ENCODE measurements at regions of chr11 and their contacts with region 1.

Region 1: DNA sequence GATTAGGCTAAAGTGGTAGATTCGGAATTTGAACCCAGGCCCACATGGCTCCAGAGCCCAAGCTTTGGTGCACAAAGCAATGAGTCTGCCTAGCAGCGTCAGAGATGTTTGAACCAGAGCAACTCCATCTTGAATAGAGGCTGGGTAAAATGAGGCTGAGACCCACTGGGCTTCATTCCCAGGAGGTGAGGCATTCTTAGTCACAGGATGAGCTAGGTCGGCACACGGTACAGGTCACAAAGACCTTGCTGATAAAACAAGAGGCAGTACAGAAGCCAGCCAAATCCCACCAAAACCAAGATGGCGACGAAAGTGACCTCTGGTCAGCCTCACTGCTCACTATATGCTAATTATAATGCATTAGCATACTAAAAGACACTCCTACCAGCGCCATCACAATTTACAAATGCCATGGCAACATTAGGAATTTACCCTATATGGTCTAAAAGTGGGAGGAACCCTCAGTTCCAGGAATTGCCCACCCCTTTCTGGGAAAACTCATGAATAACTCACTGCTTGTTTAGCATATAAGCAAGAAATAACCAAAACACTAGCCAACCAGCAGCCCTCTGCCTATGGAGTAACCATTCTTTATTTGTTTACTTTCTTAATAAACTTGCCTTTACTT is 40.3 kb upstream of the DAGLA start:
- DNase-seq: peak; percentile 12
- ATAC-seq: no peak
- H3K4me3 Mint-ChIP-seq: no peak overlapping the region
- H3K27ac Mint-ChIP-seq: no peak overlapping the region
- H3K4me1 Mint-ChIP-seq: no peaks in the 10 kb centered on the region
- H3K27me3 Mint-ChIP-seq: no peaks in the 10 kb centered on the region
- CTCF ChIP-seq: no peak

Region 2: GRCh38 chr11:61446211-61446651 is 193.7 kb before region 1 on chr11:
- CTCF ChIA-PET with region 1: interaction called, 15 read pairs
- POLR2A ChIA-PET with region 1: no interaction called
- intact Hi-C with region 1: no loop called
- DNase-seq: peak; percentile 92
- ATAC-seq: peak; percentile 92
- H3K4me3 Mint-ChIP-seq: no peak overlapping the region
- H3K27ac Mint-ChIP-seq: peak overlapping the region; percentile 54
- H3K4me1 Mint-ChIP-seq: peaks cover 32% of the 10 kb centered on the region
- H3K27me3 Mint-ChIP-seq: no peaks in the 10 kb centered on the region
- CTCF ChIP-seq: peak; percentile 75

Region 3: GRCh38 chr11:61516675-61517572 is 123.0 kb before region 1 on chr11:
- CTCF ChIA-PET with region 1: interaction called, 10 read pairs
- POLR2A ChIA-PET with region 1: no interaction called
- intact Hi-C with region 1: no loop called
- DNase-seq: peak; percentile 74
- ATAC-seq: peak; percentile 88
- H3K4me3 Mint-ChIP-seq: peak overlapping the region; percentile 1
- H3K27ac Mint-ChIP-seq: no peak overlapping the region
- H3K4me1 Mint-ChIP-seq: peaks cover 6% of the 10 kb centered on the region
- H3K27me3 Mint-ChIP-seq: peaks cover 8% of the 10 kb centered on the region
- CTCF ChIP-seq: peak; percentile 99

Region 4: DNA sequence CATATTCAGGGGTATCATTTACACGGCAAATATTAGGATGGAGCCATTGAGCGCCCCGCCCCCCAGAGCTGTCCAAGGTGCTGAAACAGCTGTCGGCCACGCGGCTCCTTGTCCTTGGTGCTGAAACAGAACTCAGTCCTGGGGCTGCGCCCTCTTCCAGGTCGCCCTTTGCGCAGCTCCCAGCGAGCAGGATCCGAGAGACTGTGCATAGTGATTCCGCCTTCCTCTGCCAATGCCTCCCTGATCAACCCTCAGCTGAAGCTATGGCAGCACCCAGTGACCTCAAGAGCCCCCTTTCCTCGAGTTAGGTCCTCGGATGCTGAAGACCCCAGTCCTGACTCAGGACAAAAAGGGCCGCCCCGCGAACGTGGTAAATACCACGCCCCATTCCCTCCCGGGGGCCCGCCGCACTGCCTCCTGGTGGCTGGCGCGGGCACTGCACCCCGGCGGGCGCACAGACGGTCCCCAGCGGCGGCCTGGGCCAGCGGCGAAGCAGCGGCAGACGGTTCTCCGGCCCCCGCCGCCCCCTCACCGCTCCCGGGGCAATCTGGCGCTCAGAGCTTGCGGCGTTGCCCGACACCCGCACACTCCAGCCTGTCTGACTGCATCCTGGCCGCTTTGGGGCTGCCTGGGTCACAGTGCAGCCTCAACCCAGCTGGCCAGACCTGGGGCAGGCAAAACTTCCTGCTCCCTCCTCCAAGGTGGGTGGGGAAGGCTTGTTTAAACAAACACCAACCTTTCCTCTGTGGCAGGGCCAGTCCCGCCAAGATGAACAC is 72.5 kb before region 1 on chr11:
- CTCF ChIA-PET with region 1: interaction called, 13 read pairs
- POLR2A ChIA-PET with region 1: no interaction called
- intact Hi-C with region 1: no loop called
- DNase-seq: peak; percentile 83
- ATAC-seq: peak; percentile 94
- H3K4me3 Mint-ChIP-seq: no peak overlapping the region
- H3K27ac Mint-ChIP-seq: no peak overlapping the region
- H3K4me1 Mint-ChIP-seq: no peaks in the 10 kb centered on the region
- H3K27me3 Mint-ChIP-seq: peaks cover 38% of the 10 kb centered on the region
- CTCF ChIP-seq: peak; percentile 65

Region 5: GRCh38 chr11:61627567-61628445 is 12.1 kb before region 1 on chr11:
- CTCF ChIA-PET with region 1: interaction called, 28 read pairs
- POLR2A ChIA-PET with region 1: no interaction called
- intact Hi-C with region 1: no loop called
- DNase-seq: peak; percentile 68
- ATAC-seq: peak; percentile 77
- H3K4me3 Mint-ChIP-seq: no peak overlapping the region
- H3K27ac Mint-ChIP-seq: no peak overlapping the region
- H3K4me1 Mint-ChIP-seq: peaks cover 7% of the 10 kb centered on the region
- H3K27me3 Mint-ChIP-seq: peaks cover 9% of the 10 kb centered on the region
- CTCF ChIP-seq: peak; percentile 76

Region 6: GRCh38 chr11:61667684-61668305 is 27.9 kb after region 1 on chr11:
- CTCF ChIA-PET with region 1: interaction called, 15 read pairs
- POLR2A ChIA-PET with region 1: no interaction called
- intact Hi-C with region 1: no loop called
- DNase-seq: no peak
- ATAC-seq: no peak
- H3K4me3 Mint-ChIP-seq: no peak overlapping the region
- H3K27ac Mint-ChIP-seq: no peak overlapping the region
- H3K4me1 Mint-ChIP-seq: no peaks in the 10 kb centered on the region
- H3K27me3 Mint-ChIP-seq: peaks cover 7% of the 10 kb centered on the region
- CTCF ChIP-seq: no peak

Region 7: DNA sequence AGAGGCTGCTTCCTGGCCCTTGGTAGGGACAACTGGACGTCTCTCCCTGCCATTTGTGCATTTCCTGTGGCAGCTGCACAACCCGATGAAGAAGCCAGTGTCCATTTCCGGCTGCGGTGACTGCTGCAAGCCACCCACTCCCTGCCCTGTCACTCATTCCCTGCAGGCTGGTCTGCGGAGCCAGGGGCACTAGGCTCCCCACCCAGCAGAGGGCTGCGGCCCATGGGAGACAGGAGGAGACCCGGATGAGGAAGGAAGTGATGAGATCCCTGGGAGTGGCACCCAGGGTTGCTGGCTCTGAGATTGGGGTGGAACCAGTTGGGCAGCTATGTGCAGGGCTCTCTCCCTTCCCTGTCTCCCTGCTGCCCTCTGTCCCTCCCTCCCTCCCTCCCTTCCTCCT is 102.5 kb after region 1 on chr11:
- CTCF ChIA-PET with region 1: no interaction called
- POLR2A ChIA-PET with region 1: no interaction called
- intact Hi-C with region 1: no loop called
- DNase-seq: no peak
- ATAC-seq: no peak
- H3K4me3 Mint-ChIP-seq: no peak overlapping the region
- H3K27ac Mint-ChIP-seq: no peak overlapping the region
- H3K4me1 Mint-ChIP-seq: no peaks in the 10 kb centered on the region
- H3K27me3 Mint-ChIP-seq: no peaks in the 10 kb centered on the region
- CTCF ChIP-seq: no peak

Region 8: DNA sequence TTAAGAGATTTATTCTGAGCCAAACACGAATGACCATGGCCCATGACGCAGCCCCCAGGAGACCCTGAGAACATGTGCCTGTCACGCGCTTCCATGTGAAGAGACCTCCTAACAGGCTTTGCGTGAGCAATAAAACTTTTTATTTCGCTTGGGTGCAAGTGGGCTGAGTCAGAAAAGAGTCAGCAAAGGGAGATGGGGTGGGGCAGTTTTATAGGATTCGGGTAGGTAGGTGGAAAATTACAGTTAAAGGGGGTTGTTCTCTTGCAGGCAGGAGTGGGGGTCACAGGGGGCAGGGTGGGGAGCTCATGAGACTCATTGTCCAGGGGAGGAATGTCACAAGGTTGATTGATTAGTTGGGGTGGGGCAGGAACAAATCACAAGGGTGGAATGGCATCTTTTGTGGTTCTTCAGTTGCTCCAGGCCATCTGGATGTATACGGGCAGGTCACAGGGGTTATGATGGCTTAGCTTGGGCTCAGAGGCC is 404.8 kb after region 1 on chr11:
- CTCF ChIA-PET with region 1: no interaction called
- POLR2A ChIA-PET with region 1: no interaction called
- intact Hi-C with region 1: no loop called
- DNase-seq: no peak
- ATAC-seq: no peak
- H3K4me3 Mint-ChIP-seq: no peak overlapping the region
- H3K27ac Mint-ChIP-seq: no peak overlapping the region
- H3K4me1 Mint-ChIP-seq: no peaks in the 10 kb centered on the region
- H3K27me3 Mint-ChIP-seq: peaks cover 7% of the 10 kb centered on the region
- CTCF ChIP-seq: no peak